Activated B cell treated with CpG ODN at 0.5 μM for 24 hours (primary cell): ENCODE measurements at regions of chr19 and their contacts with region 1.

Region 1: DNA sequence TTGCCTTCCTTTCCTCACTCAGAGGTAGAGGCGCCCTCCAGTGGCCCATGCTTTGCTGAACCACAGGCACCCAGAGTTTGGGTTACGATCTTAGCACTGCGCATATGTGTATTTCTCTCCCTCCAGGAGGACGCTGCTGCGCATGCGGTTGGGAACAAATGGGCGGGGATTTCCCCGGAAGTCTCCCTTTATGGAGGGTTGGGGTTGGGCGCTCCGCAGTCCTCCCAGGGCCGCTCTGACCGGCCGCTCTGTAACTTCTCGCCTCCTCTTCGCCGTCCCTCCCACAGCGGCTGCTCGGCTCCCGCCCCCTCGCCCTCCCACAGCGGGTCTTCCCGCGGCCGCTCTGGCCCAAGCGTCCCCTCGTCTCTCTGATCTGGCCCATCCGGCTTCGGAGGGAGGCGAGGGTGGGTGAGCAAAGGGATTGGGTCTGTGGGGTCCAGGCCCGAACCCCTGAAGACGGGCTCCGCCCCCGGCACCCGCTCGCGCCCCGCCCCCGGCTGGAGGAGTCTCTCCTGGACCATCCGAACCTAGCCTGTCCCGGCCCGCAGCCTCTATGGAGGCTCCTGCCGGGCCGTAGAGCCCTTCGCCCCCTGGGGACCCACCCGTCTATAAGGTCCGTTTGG is at the start of gene MEGF8:
- DNase-seq: peak; percentile 94
- ATAC-seq: peak; percentile 90
- H3K4me3 Mint-ChIP-seq: peak within 1 kb of the TSS; percentile 87
- H3K27ac Mint-ChIP-seq: peak within 1 kb of the TSS; percentile 75
- H3K4me1 Mint-ChIP-seq: peaks cover 21% of the 10 kb centered on the region
- H3K27me3 Mint-ChIP-seq: peaks cover 7% of the 10 kb centered on the region
- CTCF ChIP-seq: peak; percentile 5
- total RNA-seq, gene MEGF8: 13.0 and 15.1 TPM in 2 replicates

Region 2: GRCh38 chr19:41959056-41960053 is 366.0 kb before region 1 on chr19 and contains the start of gene RABAC1:
- CTCF ChIA-PET with region 1: no interaction called
- POLR2A ChIA-PET with region 1: no interaction called
- intact Hi-C with region 1: loop called (anchors 2 kb)
- DNase-seq: peak; percentile 79
- ATAC-seq: peak; percentile 91
- H3K4me3 Mint-ChIP-seq: peak within 1 kb of the TSS; percentile 90
- H3K27ac Mint-ChIP-seq: peak within 1 kb of the TSS; percentile 90
- H3K4me1 Mint-ChIP-seq: peaks cover 17% of the 10 kb centered on the region
- H3K27me3 Mint-ChIP-seq: no peaks in the 10 kb centered on the region
- CTCF ChIP-seq: no peak
- total RNA-seq, gene RABAC1: 96.7 and 102 TPM in 2 replicates

Region 3: GRCh38 chr19:42108527-42109389 is 216.6 kb before region 1 on chr19:
- CTCF ChIA-PET with region 1: no interaction called
- POLR2A ChIA-PET with region 1: no interaction called
- intact Hi-C with region 1: loop called (anchors 1 kb)
- DNase-seq: peak; percentile 76
- ATAC-seq: peak; percentile 92
- H3K4me3 Mint-ChIP-seq: peak overlapping the region; percentile 47
- H3K27ac Mint-ChIP-seq: peak overlapping the region; percentile 81
- H3K4me1 Mint-ChIP-seq: peaks cover 69% of the 10 kb centered on the region
- H3K27me3 Mint-ChIP-seq: no peaks in the 10 kb centered on the region
- CTCF ChIP-seq: peak; percentile 99

Region 4: GRCh38 chr19:42301656-42302203 is 23.7 kb before region 1 on chr19 and contains the start of gene PRR19:
- CTCF ChIA-PET with region 1: interaction called, 4 read pairs
- POLR2A ChIA-PET with region 1: interaction called, 4 read pairs
- intact Hi-C with region 1: loop called (anchors 1 kb)
- DNase-seq: no peak
- ATAC-seq: no peak
- H3K4me3 Mint-ChIP-seq: peak within 1 kb of the TSS; percentile 84
- H3K27ac Mint-ChIP-seq: peak within 1 kb of the TSS; percentile 81
- H3K4me1 Mint-ChIP-seq: peaks cover 25% of the 10 kb centered on the region
- H3K27me3 Mint-ChIP-seq: no peaks in the 10 kb centered on the region
- CTCF ChIP-seq: no peak
- total RNA-seq, gene PRR19: 0.20 and 0.33 TPM in 2 replicates

Region 5: DNA sequence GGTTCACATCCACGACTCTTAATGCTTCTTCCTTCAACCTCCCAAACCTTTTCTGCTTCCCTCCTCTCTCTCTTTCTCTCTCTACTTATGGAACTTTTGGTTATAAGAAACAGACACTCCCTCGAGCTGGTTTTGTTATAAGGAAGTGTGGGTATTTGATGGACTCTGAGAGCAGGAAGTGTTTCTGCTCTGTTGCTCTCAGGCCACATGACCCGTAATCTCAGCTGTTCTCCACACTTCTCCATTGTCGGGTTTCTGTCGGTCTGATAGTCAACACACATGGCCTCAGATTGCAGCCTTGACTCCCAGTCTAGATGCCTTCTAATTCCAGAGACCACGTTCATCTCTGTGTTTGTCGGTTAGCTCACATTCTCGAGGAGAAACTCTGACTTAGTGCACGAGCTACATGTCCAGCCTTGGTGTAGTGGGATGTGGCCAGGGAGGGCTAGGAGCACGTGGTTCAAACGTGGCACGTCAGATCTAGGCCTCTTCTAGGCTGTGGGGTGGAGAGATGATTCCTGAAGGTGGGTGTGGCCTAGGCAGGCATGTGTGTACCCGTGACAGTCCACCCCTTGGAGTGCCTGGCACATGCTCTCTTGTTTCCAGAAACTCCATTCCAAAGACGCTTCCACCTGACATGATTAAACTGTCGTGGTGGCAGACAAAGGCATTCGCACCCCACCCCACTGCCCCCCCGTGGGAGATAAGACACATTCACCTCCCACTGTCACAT is 38.4 kb after region 1 on chr19:
- CTCF ChIA-PET with region 1: no interaction called
- POLR2A ChIA-PET with region 1: no interaction called
- intact Hi-C with region 1: loop called (anchors 1 kb)
- DNase-seq: no peak
- ATAC-seq: peak; percentile 34
- H3K4me3 Mint-ChIP-seq: peak overlapping the region; percentile 64
- H3K27ac Mint-ChIP-seq: peak overlapping the region; percentile 88
- H3K4me1 Mint-ChIP-seq: peaks cover 46% of the 10 kb centered on the region
- H3K27me3 Mint-ChIP-seq: no peaks in the 10 kb centered on the region
- CTCF ChIP-seq: no peak

Region 6: GRCh38 chr19:42401365-42402303 is 76.2 kb after region 1 on chr19:
- CTCF ChIA-PET with region 1: interaction called, 4 read pairs
- POLR2A ChIA-PET with region 1: interaction called, 3 read pairs
- intact Hi-C with region 1: loop called (anchors 1 kb)
- DNase-seq: peak; percentile 74
- ATAC-seq: peak; percentile 49
- H3K4me3 Mint-ChIP-seq: peak overlapping the region; percentile 80
- H3K27ac Mint-ChIP-seq: peak overlapping the region; percentile 72
- H3K4me1 Mint-ChIP-seq: peaks cover 46% of the 10 kb centered on the region
- H3K27me3 Mint-ChIP-seq: no peaks in the 10 kb centered on the region
- CTCF ChIP-seq: no peak